Left ventricle myocardium superior (tissue), 1 donor: ENCODE measurements at regions of chr6 and their contacts with region 1.

Region 1: DNA sequence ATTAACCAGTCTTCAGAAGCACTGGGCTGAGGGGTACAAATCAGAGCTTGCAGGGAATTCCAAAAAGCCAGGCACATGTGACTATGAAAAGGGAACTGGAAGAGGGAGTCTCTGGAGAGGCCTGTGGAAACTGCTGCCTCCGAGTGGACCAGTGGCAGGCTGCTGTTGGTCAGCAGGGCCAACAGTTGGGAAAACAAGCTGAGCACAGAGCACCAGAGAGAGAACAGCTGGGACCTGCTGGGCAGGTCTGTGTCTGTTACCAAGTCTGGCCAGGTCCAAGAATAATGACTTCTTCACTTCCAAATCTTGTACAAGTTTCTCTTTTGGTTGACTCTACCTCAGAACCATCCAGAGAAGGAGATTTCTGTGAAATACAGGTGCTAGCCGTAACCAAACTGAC is 81.4 kb downstream of the LIN28B start:
- DNase-seq: peak; percentile 30
- ATAC-seq: peak; percentile 52

Region 2: GRCh38 chr6:104955927-104956730 is 82.1 kb before region 1 on chr6:
- intact Hi-C with region 1: no loop called
- DNase-seq: no peak
- ATAC-seq: no peak

Region 3: DNA sequence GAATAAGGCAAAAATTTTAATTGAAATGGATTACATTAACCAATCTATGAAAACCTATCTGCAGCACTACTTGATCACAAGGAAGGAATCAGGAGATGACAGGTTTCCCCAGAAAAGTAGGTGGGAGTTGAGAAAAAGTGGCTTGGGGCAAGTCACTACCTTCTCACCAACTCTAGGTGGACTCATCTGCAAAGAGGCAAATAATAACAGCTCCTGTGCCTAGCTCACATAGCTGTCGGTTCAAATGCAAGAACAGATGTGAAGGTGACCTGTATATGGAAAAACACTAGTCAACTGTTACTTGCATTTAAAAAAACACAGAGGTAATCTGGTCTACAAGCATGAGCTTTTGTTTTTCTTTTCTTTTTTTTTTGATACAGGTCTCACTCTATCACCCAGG is 74.3 kb after region 1 on chr6:
- intact Hi-C with region 1: no loop called
- DNase-seq: no peak
- ATAC-seq: peak; percentile 62

Region 4: GRCh38 chr6:105139033-105139432 is 100.8 kb after region 1 on chr6:
- intact Hi-C with region 1: no loop called
- DNase-seq: no peak
- ATAC-seq: no peak

Region 5: DNA sequence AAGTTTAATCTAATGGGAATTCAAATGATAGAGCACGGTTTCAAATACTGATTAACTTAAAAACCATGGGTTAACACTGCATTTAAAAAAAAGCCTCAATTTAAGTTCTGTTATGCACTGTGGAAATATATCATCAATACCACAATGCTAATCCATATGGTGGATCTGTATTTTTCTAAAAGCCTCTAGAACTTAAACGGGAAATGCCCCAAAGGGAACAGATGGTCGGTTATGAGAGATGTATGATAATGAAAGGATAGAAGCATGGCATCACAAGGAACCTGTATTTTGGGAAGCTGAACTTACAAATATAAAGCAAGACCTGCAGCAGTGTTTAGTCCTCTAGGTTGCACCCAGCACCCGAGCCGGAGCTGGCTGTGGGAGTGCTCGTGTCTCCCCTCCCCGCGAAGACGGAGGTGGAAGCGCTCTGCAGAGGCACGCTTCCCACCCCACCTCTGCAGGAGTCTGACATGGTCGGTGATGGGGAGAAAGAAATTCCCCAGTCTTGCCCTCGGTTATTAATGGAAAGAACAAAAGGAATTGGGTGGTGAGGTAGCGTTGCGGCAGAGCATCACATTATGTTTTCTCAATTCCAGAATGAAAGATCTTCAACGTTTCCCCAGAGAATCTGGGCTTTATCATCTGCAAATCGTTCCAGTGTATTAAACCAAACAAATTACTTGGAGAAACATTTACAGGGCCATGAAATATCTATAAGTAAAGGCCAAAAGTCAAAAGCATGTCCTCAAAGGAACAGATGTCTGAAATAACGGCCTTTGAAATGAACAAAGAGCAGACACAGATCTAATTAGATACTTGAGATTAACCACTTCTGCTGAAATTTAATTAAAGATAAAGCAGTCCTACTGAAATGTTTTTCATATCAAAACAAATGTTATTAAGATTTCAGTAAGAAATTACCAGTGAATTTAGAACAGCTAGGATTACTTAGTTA is 244.6 kb after region 1 on chr6:
- intact Hi-C with region 1: loop called (anchors 10 kb)
- DNase-seq: no peak
- ATAC-seq: no peak